ENCODE measurements at regions of chr5 and their contacts with region 1.

Region 1: GRCh38 chr5:96614110-96614691 is 48.0 kb upstream of the CAST start:
- DNase-seq: peak; percentile 95
- H3K4me3 Mint-ChIP-seq: peak overlapping the region; percentile 33
- H3K27ac Mint-ChIP-seq: peak overlapping the region; percentile 84
- H3K4me1 Mint-ChIP-seq: peaks cover 22% of the 10 kb centered on the region
- H3K27me3 Mint-ChIP-seq: no peaks in the 10 kb centered on the region
- CTCF ChIP-seq: peak; percentile 66

Region 2: DNA sequence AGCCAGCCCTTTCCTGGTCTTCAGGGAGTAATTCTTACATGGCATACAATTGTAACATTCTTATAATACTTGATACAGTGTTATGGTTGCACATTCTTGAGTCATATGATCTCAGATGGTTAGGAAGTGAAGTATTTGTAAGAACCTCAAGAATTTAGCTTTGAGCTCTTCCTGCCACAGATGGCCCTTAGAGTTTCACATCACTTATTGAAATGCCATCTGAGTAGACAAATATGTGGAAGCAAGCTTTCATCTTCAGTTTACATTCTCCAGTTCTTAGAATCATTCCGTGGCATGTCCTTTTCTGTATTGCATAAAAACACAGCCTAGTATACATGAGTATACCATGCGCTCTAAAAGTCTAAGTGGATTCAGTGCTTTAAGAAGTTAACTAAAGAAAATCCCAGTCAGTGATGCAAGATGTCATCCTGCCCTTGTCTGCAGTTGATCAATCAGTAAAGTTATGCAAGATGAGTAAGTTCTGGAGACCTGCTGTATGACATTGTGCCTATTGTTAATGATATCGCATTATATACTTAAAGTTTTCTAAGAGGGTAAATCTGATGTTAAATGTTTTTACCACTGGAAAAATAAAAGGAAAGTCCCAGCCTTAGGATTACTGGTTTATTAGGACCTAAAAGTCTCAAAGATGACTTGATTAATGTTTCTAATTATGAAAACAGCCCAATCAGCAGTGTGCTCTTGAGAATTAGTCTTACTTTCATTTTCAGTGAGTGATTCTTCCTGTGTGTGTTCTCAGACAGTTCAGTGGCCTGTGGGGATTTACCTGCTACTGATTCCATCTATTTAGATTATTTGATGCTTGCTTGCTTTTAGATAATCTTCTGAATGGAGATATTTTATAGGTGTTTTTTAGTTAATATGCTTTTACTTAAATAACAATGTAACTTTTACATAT is 853.7 kb before region 1 on chr5:
- CTCF ChIA-PET with region 1: no interaction called
- POLR2A ChIA-PET with region 1: no interaction called
- intact Hi-C with region 1: no loop called
- DNase-seq: peak; percentile 50
- H3K4me3 Mint-ChIP-seq: peak overlapping the region; percentile 43
- H3K27ac Mint-ChIP-seq: peak overlapping the region; percentile 70
- H3K4me1 Mint-ChIP-seq: peaks cover 6% of the 10 kb centered on the region
- H3K27me3 Mint-ChIP-seq: no peaks in the 10 kb centered on the region
- CTCF ChIP-seq: no peak

Region 3: GRCh38 chr5:96344678-96345577 is 269.3 kb before region 1 on chr5:
- CTCF ChIA-PET with region 1: interaction called, 16 read pairs
- POLR2A ChIA-PET with region 1: interaction called, 4 read pairs
- intact Hi-C with region 1: no loop called
- DNase-seq: peak; percentile 83
- H3K4me3 Mint-ChIP-seq: no peak overlapping the region
- H3K27ac Mint-ChIP-seq: no peak overlapping the region
- H3K4me1 Mint-ChIP-seq: peaks cover 16% of the 10 kb centered on the region
- H3K27me3 Mint-ChIP-seq: no peaks in the 10 kb centered on the region
- CTCF ChIP-seq: peak; percentile 67

Region 4: DNA sequence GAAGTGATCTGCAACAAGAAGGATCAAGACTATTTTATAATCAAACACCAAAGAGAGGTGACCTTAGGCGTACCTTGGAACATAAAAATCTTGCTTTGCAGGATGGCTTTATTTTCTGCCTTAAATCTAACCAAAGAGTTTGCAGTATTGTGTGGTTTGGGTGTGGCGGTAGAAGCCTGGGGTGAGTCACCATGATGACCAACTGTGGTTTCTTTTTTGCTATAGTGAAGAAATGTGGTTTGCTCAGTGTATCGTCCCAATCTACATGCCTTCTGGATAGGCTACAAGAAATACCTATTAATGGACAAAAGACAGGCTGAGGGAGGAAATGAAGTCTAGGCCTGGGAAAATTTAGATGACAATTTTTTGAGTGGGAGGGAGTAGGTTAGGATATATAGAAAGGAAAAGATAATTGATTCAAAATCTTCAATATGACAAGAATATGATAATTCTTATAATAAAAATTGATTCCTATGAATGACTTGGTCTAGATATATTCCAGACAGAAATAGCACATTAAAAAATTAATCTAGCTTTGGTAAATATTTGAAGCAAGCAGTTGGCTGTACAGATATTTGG is 43.0 kb after region 1 on chr5:
- CTCF ChIA-PET with region 1: interaction called, 47 read pairs
- POLR2A ChIA-PET with region 1: interaction called, 157 read pairs
- intact Hi-C with region 1: no loop called
- DNase-seq: peak; percentile 92
- H3K4me3 Mint-ChIP-seq: peak overlapping the region; percentile 2
- H3K27ac Mint-ChIP-seq: peak overlapping the region; percentile 69
- H3K4me1 Mint-ChIP-seq: peaks cover 42% of the 10 kb centered on the region
- H3K27me3 Mint-ChIP-seq: no peaks in the 10 kb centered on the region
- CTCF ChIP-seq: no peak

Region 5: DNA sequence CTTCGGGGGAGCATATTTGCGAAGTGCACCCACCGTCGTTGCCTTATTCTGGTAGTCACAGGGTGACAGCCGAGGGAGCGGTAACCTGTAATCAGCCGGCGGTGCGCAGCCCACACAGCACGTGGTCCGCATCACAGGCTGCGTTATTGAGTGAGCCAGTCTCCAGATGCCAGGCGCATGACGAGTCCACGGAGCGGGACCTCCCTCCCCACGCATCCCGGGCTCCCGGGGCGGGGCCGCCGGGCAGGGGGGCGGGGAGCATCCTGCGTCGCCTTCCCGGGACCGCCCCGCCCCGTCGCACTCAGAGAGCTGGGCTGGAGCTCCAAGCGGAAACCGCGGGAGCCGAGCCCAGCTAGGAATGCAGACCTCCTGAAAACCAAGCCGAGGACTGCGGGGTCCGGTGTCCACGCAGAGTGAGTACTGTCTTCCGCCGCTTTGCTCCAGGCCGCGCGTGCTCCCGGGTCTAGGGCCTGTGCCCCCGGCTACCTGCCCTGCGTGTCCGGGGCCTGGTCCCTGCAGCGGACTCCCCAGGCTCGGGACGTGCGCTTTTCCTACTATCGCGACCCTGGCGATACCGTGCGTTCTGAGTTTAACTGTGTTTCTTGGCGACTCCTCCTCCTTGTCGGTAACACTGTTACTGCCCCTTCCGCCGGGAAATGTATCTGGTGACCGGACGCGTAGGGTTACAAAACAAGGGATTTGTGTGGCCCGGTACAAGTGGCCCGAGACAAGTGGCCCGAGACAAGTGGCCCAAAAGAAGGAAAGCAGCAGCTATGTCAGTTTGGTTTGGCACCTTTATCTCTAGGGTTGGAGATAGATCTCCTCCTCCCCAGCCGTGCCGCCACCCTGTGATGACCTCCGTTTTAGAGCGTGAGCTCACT is 88.5 kb after region 1 on chr5:
- CTCF ChIA-PET with region 1: interaction called, 12 read pairs
- POLR2A ChIA-PET with region 1: interaction called, 34 read pairs
- intact Hi-C with region 1: no loop called
- DNase-seq: peak; percentile 91
- H3K4me3 Mint-ChIP-seq: peak overlapping the region; percentile 82
- H3K27ac Mint-ChIP-seq: peak overlapping the region; percentile 97
- H3K4me1 Mint-ChIP-seq: peaks cover 56% of the 10 kb centered on the region
- H3K27me3 Mint-ChIP-seq: no peaks in the 10 kb centered on the region
- CTCF ChIP-seq: no peak

Region 6: DNA sequence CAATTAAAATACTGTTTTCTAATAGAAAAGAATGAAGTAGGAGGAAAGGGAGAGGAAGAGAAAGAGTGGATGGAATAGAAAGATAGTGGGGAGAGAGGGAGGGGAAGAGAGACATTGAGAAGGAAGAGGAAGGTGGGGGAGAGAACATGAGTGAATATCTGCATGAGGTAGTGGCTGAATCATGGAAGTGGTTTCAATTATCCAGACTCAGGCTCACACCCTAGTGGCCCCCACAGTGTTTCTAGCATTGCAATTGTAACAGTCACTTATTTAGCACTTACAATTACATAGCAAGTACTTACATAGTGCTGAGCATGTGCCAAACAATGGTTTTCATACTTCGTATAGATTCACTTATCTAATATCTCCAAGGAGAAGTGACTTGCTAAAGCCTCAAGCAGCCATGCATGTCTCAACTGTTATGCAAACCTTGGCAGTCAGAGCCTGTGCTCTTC is 120.7 kb after region 1 on chr5:
- CTCF ChIA-PET with region 1: interaction called, 32 read pairs
- POLR2A ChIA-PET with region 1: interaction called, 7 read pairs
- intact Hi-C with region 1: no loop called
- DNase-seq: peak; percentile 19
- H3K4me3 Mint-ChIP-seq: no peak overlapping the region
- H3K27ac Mint-ChIP-seq: no peak overlapping the region
- H3K4me1 Mint-ChIP-seq: peaks cover 27% of the 10 kb centered on the region
- H3K27me3 Mint-ChIP-seq: no peaks in the 10 kb centered on the region
- CTCF ChIP-seq: no peak

Region 7: DNA sequence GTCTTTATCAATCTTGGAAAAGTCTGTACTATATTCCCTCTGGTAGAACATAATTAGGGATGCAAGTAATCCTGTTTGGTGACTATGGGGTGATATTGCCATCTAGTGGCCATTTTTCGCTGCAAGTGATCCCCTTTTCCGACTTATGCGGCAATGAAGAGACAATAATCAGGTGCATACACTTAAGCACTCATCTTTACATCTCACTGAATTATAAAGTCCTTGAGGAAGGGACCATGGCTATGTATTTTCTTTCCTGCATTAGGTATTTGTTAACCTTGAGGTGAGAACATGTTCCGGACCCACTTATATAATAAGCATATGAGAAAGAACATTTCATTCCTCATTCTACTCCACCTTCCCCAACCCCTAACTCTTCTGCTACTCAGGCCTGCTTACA is 547.8 kb after region 1 on chr5:
- CTCF ChIA-PET with region 1: interaction called, 4 read pairs
- POLR2A ChIA-PET with region 1: no interaction called
- intact Hi-C with region 1: loop called (anchors 1 kb)
- DNase-seq: peak; percentile 80
- H3K4me3 Mint-ChIP-seq: no peak overlapping the region
- H3K27ac Mint-ChIP-seq: no peak overlapping the region
- H3K4me1 Mint-ChIP-seq: peaks cover 5% of the 10 kb centered on the region
- H3K27me3 Mint-ChIP-seq: peaks cover 11% of the 10 kb centered on the region
- CTCF ChIP-seq: peak; percentile 81

Region 8: DNA sequence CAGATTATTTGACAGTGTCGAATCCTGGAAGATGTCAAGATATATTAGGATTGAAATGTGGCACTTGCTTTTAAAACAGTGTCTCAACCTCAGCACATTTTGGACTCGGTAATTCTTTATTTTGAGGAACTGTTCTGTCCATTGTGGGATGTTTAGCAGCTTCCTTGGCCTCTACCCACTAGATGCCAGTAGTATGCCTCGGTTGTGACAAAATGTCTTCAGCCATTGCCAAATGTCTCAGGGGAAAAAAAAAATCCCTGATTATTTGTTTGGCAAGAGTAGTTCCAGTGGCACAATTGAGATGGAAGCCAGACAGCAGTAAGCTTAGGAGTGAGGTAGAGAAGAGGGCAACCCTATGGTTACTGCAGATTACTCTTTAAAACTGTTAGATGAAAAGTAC is 1263.4 kb after region 1 on chr5:
- CTCF ChIA-PET with region 1: no interaction called
- POLR2A ChIA-PET with region 1: no interaction called
- intact Hi-C with region 1: no loop called
- DNase-seq: no peak
- H3K4me3 Mint-ChIP-seq: no peak overlapping the region
- H3K27ac Mint-ChIP-seq: no peak overlapping the region
- H3K4me1 Mint-ChIP-seq: peaks cover 7% of the 10 kb centered on the region
- H3K27me3 Mint-ChIP-seq: no peaks in the 10 kb centered on the region
- CTCF ChIP-seq: no peak

Measured in MCF 10A (cell line).